AG04449 (cell line): ENCODE measurements at regions of chr12 and their contacts with region 1.

Region 1: GRCh38 chr12:30882706-30883105 is 43.8 kb upstream of the TSPAN11 start:
- DNase-seq: no peak
- H3K4me3 ChIP-seq: no peak overlapping the region
- CTCF ChIP-seq: peak; percentile 5

Region 2: GRCh38 chr12:30862486-30862885 is 20.2 kb before region 1 on chr12:
- CTCF ChIA-PET with region 1: no interaction called
- POLR2A ChIA-PET with region 1: no interaction called
- DNase-seq: no peak
- H3K4me3 ChIP-seq: no peak overlapping the region
- CTCF ChIP-seq: no peak

Region 3: GRCh38 chr12:30896461-30896860 is 13.8 kb after region 1 on chr12:
- CTCF ChIA-PET with region 1: no interaction called
- POLR2A ChIA-PET with region 1: no interaction called
- DNase-seq: no peak
- H3K4me3 ChIP-seq: no peak overlapping the region
- CTCF ChIP-seq: no peak

Region 4: GRCh38 chr12:30985814-30986452 is 103.2 kb after region 1 on chr12:
- CTCF ChIA-PET with region 1: interaction called, 10 read pairs
- POLR2A ChIA-PET with region 1: no interaction called
- DNase-seq: no peak
- H3K4me3 ChIP-seq: no peak overlapping the region
- CTCF ChIP-seq: peak; percentile 94